ENCODE measurements at regions of chr14 and their contacts with region 1.

Region 1: DNA sequence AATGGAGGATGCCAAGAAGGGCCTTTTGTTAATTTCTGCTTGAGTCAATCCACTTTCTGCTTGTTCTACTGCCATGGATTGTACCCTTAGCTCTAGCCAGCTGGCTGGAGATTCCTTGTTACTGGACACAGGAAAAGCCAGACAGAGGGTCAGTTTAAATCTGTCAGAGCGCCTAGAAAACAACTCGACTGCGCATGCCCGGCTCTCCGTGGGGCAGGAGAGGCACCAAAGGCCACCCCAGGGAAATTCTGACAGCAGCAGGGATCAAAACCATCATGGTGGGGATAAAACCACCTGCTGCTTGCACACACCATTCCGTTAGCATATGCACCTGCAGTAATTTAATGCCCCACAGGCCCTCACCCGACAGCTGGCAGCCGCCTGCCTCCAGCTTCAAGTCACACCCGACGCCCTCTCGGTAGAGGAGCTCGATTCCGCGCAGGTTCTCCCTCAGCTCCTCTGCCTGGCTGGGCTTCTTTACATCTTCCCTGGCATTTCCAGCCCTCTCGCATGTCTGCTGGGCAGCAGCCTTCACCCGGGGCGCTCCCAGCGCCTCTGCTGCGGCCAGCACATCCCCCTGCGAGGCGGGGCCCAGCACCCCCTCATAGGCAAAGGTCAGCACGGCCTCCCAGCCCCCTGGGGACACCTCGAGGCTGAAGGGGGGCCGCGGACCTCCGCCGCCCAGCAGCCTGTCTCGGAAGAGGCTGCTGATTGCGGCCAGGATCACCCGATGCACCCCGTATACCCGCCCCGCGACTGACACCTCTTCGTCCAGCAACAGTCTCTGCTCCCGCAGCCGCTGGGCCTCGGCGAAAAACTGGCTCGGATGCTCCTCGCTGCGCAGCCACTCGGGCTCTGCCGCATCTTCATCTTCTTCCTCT is 1.0 kb downstream of the KLHL33 start:
- DNase-seq: no peak
- H3K4me3 ChIP-seq: peak overlapping the region; percentile 20
- CTCF ChIP-seq: no peak

Region 2: GRCh38 chr14:20179218-20179617 is 255.7 kb before region 1 on chr14:
- CTCF ChIA-PET with region 1: no interaction called
- POLR2A ChIA-PET with region 1: no interaction called
- DNase-seq: no peak
- H3K4me3 ChIP-seq: no peak overlapping the region
- CTCF ChIP-seq: no peak

Region 3: DNA sequence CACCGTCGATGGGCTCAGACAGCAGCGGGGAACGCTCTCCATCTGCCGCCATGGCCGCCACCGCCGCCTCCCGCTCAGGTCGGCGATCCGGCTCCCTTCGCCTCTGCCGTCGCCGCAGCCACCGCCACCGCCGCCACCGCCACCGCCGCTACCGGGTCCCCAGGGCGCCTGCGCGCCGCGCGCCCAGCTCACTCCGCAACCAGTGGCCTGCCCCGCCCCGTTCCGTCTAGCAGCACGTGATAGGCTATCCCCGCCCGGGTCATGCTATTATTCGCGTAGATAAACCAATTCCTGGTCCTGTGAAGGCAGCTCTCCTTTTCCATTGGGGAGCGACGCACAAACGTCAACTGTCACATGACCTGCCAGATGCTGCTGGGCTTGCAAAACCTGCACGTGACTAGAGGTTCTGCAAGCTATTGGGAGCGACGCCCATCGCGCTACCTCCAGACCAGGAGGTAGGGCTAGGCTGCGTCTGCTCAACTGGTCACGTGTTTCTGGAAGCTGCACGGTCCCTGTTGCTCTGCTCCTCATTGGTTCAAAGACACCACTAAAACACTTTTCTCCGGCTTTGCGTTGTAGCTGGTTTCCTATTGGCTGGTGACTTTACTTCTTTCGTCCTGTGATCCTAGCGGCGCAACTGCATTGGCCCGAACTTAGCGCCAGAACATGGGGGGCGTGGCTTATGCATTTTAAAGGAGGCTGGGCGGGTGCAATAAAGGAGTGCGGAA is 26.5 kb after region 1 on chr14 and contains the start of gene PIP4P1:
- CTCF ChIA-PET with region 1: no interaction called
- POLR2A ChIA-PET with region 1: interaction called, 11 read pairs
- DNase-seq: peak; percentile 100
- H3K4me3 ChIP-seq: peak within 1 kb of the TSS; percentile 78
- CTCF ChIP-seq: no peak

Region 4: GRCh38 chr14:20524027-20524426 is 89.1 kb after region 1 on chr14:
- CTCF ChIA-PET with region 1: no interaction called
- POLR2A ChIA-PET with region 1: no interaction called
- DNase-seq: no peak
- H3K4me3 ChIP-seq: no peak overlapping the region
- CTCF ChIP-seq: no peak